Mammary epithelial cell (primary cell): ENCODE measurements at regions of chr5 and their contacts with region 1.

Region 1: GRCh38 chr5:31839005-31839404 is 200.1 kb downstream of the PDZD2 start:
- DNase-seq: no peak
- H3K4me3 ChIP-seq: no peak overlapping the region
- H3K27ac ChIP-seq: no peak overlapping the region
- H3K4me1 ChIP-seq: no peaks in the 10 kb centered on the region
- H3K27me3 ChIP-seq: peaks cover 2% of the 10 kb centered on the region
- CTCF ChIP-seq: no peak

Region 2: GRCh38 chr5:31889001-31889561 is 50.1 kb after region 1 on chr5:
- CTCF ChIA-PET with region 1: no interaction called
- dilution Hi-C with region 1: loop called (anchors 5 kb)
- in situ Hi-C with region 1: no loop called
- intact Hi-C with region 1: no loop called
- DNase-seq: no peak
- H3K4me3 ChIP-seq: no peak overlapping the region
- H3K27ac ChIP-seq: no peak overlapping the region
- H3K4me1 ChIP-seq: peaks cover 3% of the 10 kb centered on the region
- H3K27me3 ChIP-seq: peaks cover under 1% of the 10 kb centered on the region
- CTCF ChIP-seq: no peak